MCF 10A (cell line): ENCODE measurements at regions of chr13 and their contacts with region 1.

Region 1: GRCh38 chr13:42875475-42876269 is 94.3 kb downstream of the FAM216B start:
- DNase-seq: no peak
- H3K4me3 Mint-ChIP-seq: no peak overlapping the region
- H3K27ac Mint-ChIP-seq: no peak overlapping the region
- H3K4me1 Mint-ChIP-seq: peaks cover 23% of the 10 kb centered on the region
- H3K27me3 Mint-ChIP-seq: no peaks in the 10 kb centered on the region
- CTCF ChIP-seq: no peak

Region 2: DNA sequence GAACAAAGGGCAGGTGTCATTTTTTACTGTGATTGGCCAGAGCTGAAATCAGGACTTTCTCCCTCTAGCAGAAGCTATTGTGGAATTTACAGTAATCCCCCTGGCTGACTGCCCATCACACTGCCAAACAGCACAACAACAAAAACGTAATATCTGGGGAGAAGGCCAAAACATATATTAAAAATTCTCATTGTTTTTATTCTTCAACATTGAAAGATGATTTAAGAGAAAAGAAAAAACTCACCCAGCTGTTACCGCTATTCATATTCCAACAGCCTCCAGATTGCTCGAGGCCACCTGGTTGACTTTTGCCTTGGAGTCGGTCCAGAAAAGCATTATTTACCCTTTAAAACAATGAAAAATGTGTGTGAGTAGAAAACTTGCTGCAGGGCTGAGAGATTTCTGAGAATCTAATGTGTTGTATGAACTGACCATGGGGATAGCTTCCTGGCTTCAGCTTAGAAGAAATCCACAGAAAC is 19.1 kb after region 1 on chr13:
- CTCF ChIA-PET with region 1: interaction called, 3 read pairs
- POLR2A ChIA-PET with region 1: interaction called, 13 read pairs
- intact Hi-C with region 1: no loop called
- DNase-seq: peak; percentile 92
- H3K4me3 Mint-ChIP-seq: no peak overlapping the region
- H3K27ac Mint-ChIP-seq: peak overlapping the region; percentile 29
- H3K4me1 Mint-ChIP-seq: peaks cover 9% of the 10 kb centered on the region
- H3K27me3 Mint-ChIP-seq: no peaks in the 10 kb centered on the region
- CTCF ChIP-seq: no peak

Region 3: DNA sequence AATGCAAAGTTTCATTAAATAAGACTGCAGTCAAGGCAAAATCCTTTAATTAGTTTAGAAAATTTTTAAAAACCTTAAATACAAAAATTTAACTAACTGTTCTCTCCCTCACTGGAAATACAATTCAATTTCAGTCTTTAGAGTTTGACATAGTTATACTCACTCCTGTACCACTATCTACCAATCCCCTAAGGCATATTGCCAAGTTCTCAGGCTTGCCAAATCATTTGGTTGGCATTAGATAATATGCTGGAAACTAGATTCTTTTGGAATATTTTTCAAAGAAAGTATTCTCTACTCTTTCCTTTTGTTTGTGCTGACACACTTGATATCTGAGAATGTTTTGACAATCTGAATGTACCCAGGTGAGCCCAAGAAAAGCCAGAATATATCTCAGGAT is 1623.3 kb after region 1 on chr13:
- CTCF ChIA-PET with region 1: no interaction called
- POLR2A ChIA-PET with region 1: no interaction called
- intact Hi-C with region 1: no loop called
- DNase-seq: peak; percentile 43
- H3K4me3 Mint-ChIP-seq: no peak overlapping the region
- H3K27ac Mint-ChIP-seq: no peak overlapping the region
- H3K4me1 Mint-ChIP-seq: peaks cover 20% of the 10 kb centered on the region
- H3K27me3 Mint-ChIP-seq: no peaks in the 10 kb centered on the region
- CTCF ChIP-seq: no peak